WTC11 (cell line): ENCODE measurements at regions of chr14 and their contacts with region 1.

Region 1: DNA sequence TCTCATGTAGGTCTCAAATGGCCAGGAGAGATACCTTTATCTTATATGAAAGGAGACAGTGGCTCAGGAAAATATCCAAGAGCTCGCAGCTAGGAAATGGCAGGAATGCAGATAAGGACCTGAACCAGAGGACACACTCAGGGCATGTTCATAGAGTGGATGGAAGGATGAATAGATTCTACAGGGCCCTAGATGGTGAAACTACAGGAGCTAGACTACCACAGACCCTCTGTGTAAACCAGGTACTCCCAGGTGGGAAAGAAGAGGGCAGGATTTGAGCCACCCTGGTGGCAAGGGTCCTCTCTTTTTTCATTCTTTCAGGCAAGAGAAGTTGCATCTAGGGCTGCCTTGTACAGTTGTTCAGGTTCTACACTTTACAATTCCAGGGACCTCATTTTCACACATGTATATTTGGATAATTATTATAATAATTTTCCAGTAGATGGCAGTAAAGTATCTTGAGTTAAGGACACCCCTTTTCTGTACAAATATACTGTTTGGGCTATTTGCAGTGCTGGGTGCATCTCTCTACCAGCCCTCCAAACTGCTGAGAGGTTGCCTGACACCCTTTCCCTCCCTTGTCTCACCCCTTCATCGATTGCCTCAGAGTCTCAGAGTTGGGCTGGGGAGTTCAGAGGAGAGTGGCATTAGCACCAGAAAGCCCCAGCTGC is 10.5 kb upstream of the ZDHHC22 start:
- DNase-seq: no peak
- ATAC-seq: no peak
- H3K4me3 Mint-ChIP-seq: no peak overlapping the region
- H3K27ac Mint-ChIP-seq: no peak overlapping the region
- H3K4me1 Mint-ChIP-seq: peaks cover 34% of the 10 kb centered on the region
- H3K27me3 Mint-ChIP-seq: no peaks in the 10 kb centered on the region
- CTCF ChIP-seq: no peak

Region 2: DNA sequence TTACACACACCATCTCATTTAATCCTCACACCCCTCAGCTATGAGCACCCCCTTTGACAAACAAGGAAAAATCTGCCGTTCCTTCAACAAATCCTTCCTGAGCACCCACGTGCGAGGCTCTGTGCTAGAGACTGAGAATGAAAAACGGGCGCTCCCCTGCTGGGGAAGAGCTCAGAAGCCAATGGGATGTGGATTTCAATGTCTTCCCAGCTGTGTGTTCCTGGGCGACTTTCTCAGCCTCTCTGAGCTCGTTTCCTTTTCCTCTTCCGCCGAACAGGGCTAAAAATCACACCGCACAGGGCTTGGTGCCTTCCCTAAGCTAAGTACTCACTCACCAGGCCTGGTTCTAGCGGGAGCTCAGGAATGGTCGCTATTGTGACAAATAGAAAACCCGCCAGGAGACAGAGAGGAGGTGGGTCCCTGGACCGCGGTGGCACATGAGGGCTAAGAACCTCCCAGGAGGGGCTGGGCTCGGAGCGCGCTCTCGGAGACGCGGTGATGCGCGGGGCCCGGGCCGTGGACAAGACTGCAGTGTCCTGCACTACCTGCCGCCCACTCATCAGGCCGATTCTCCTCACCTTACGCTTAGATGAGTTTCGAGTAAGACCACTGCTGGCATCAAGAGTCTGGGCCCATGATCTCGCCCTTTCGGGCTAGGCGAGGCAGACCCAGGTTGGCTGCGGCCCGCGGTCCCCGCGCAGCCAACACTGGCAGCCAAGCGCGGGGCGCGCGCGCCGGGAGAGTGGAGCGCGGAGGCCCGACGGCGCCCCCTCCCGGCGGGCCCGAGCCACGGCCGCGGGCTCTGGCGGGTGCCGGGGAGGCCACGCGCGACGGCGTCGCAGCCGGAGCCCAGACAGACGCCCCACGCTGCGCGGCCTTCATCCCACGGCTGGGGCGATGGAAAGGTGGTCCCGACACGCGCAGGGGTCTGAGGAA is 27.4 kb before region 1 on chr14:
- CTCF ChIA-PET with region 1: interaction called, 36 read pairs
- POLR2A ChIA-PET with region 1: no interaction called
- DNase-seq: peak; percentile 54
- ATAC-seq: peak; percentile 43
- H3K4me3 Mint-ChIP-seq: peak overlapping the region; percentile 72
- H3K27ac Mint-ChIP-seq: no peak overlapping the region
- H3K4me1 Mint-ChIP-seq: peaks cover 62% of the 10 kb centered on the region
- H3K27me3 Mint-ChIP-seq: peaks cover 7% of the 10 kb centered on the region
- CTCF ChIP-seq: peak; percentile 63; the same call in 1 of the 2 replicates

Region 3: DNA sequence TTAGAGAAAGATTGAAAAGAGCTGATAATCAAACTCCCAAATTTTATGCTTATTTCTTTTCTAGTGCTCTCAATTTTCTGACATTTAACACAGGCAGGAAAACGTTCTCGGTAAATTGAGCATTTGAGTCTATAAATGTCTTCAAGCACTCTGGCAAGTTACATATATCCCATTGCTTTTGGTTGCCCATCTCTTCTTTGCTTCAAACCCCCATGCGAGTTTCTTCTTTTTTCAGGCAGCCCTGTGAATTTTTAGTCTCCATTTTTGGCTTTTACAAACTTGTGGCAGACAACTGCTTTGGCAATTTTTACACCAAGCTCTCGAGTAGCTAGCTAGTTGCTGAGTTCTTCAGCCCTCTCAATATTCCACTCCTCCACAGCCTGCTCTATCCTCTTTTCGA is 20.9 kb after region 1 on chr14:
- CTCF ChIA-PET with region 1: interaction called, 14 read pairs
- POLR2A ChIA-PET with region 1: no interaction called
- DNase-seq: no peak
- ATAC-seq: no peak
- H3K4me3 Mint-ChIP-seq: no peak overlapping the region
- H3K27ac Mint-ChIP-seq: no peak overlapping the region
- H3K4me1 Mint-ChIP-seq: no peaks in the 10 kb centered on the region
- H3K27me3 Mint-ChIP-seq: peaks cover 2% of the 10 kb centered on the region; the same call in 1 of the 2 replicates
- CTCF ChIP-seq: no peak

Region 4: DNA sequence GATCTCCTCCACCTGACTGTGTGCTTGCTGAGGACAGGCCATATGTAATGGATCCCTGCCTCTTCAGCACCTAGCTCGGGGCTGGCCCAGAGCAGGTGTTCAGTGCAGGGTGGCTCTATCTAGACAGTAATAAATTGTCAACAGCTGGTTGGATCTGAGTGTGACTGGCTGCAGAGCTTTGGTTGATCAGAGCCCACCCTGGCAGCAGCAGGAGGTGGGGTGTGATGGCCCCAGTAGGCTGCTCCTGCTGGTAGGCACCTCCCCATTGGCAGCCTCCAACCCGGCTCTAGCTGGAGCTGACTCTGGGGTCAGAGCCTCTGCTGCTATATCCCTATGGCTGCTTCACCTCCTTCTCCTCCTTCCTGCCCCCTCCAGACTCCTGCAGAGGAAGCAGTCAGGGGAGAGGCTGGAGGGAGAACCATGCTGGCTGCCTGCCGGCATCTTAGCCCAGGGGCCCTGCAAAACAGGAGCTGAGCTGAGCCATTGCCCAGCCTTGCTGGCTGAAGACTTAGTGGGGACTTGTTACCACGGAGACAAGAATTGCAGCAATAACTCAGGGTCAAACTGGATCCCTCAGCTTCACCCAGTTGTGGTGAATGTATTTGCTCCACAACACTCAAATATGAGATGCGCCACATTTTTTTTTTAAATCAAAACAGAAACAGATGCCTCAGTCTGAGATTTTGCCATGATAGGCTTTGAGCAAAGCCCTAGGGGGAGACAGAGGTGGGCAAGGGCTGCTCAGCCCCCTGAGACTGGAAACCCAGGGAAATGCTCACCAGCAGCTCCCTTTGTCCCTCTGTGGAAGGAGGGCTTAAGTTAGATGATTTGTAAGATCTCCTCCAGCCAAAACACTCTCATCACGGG is 51.8 kb after region 1 on chr14:
- CTCF ChIA-PET with region 1: interaction called, 78 read pairs
- POLR2A ChIA-PET with region 1: no interaction called
- DNase-seq: no peak
- ATAC-seq: peak; percentile 15
- H3K4me3 Mint-ChIP-seq: no peak overlapping the region
- H3K27ac Mint-ChIP-seq: no peak overlapping the region
- H3K4me1 Mint-ChIP-seq: peaks cover 26% of the 10 kb centered on the region
- H3K27me3 Mint-ChIP-seq: peaks cover 5% of the 10 kb centered on the region; the same call in 1 of the 2 replicates
- CTCF ChIP-seq: no peak

Region 5: GRCh38 chr14:77275601-77276017 is 123.6 kb after region 1 on chr14:
- CTCF ChIA-PET with region 1: interaction called, 26 read pairs
- POLR2A ChIA-PET with region 1: no interaction called
- DNase-seq: no peak
- ATAC-seq: peak; percentile 48
- H3K4me3 Mint-ChIP-seq: no peak overlapping the region
- H3K27ac Mint-ChIP-seq: no peak overlapping the region
- H3K4me1 Mint-ChIP-seq: peaks cover 3% of the 10 kb centered on the region; the same call in 1 of the 2 replicates
- H3K27me3 Mint-ChIP-seq: peaks cover 33% of the 10 kb centered on the region
- CTCF ChIP-seq: no peak